Mammary epithelial cell (primary cell): ENCODE measurements at regions of chr1 and their contacts with region 1.

Region 1: DNA sequence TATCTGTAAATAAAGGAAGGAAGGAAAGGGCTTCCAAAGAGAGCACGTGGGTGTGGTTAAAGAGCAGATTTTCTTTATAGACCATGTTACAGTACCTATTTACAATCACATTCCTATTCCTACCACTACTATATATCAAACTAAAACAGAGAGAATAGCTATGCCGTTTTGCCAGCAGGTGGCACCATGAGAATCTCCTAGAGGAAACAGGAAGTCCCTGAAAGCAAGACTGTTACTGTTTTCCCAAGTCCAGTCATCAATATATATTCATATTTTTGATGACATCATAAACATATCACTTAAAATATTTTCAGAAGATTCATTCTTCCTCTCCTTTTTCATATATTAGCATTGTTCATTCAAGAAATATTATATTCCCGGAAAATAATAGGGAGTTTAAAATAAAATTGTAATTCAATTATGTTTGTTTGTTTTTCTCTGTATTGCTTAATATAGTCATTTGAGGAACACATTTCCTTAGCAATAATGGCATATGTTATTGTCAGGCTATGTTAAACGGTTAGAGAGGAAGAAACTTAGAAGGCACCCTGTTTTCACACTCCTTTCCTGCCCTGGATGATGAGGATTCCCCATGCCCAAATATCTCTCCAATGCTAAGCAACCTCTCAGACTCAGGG is 6.6 kb downstream of the CCDC190 start:
- DNase-seq: peak; percentile 58
- H3K4me3 ChIP-seq: no peak overlapping the region
- H3K27ac ChIP-seq: no peak overlapping the region
- H3K4me1 ChIP-seq: peaks cover 38% of the 10 kb centered on the region
- H3K27me3 ChIP-seq: no peaks in the 10 kb centered on the region
- CTCF ChIP-seq: peak; percentile 65 to 82

Region 2: GRCh38 chr1:162367073-162367472 is 487.3 kb before region 1 on chr1:
- CTCF ChIA-PET with region 1: interaction called, 13 read pairs
- dilution Hi-C with region 1: no loop called
- in situ Hi-C with region 1: no loop called
- intact Hi-C with region 1: no loop called
- DNase-seq: no peak
- H3K4me3 ChIP-seq: no peak overlapping the region
- H3K27ac ChIP-seq: no peak overlapping the region
- H3K4me1 ChIP-seq: peaks cover 16% of the 10 kb centered on the region
- H3K27me3 ChIP-seq: no peaks in the 10 kb centered on the region
- CTCF ChIP-seq: no peak

Region 3: GRCh38 chr1:162905174-162906158 is 51.1 kb after region 1 on chr1:
- CTCF ChIA-PET with region 1: no interaction called
- dilution Hi-C with region 1: no loop called
- in situ Hi-C with region 1: no loop called
- intact Hi-C with region 1: loop called (anchors 5 kb)
- DNase-seq: peak; percentile 82
- H3K4me3 ChIP-seq: no peak overlapping the region
- H3K27ac ChIP-seq: peak overlapping the region; percentile 51
- H3K4me1 ChIP-seq: peaks cover 42% of the 10 kb centered on the region
- H3K27me3 ChIP-seq: no peaks in the 10 kb centered on the region
- CTCF ChIP-seq: no peak

Region 4: GRCh38 chr1:163174524-163175437 is 320.4 kb after region 1 on chr1:
- CTCF ChIA-PET with region 1: no interaction called
- dilution Hi-C with region 1: loop called (anchors 25 kb)
- in situ Hi-C with region 1: loop called in 1 of 2 experiments (anchors 10 kb)
- intact Hi-C with region 1: loop called (anchors 1 kb)
- DNase-seq: peak; percentile 20
- H3K4me3 ChIP-seq: no peak overlapping the region
- H3K27ac ChIP-seq: no peak overlapping the region
- H3K4me1 ChIP-seq: no peaks in the 10 kb centered on the region
- H3K27me3 ChIP-seq: no peaks in the 10 kb centered on the region
- CTCF ChIP-seq: peak; percentile 78 to 92

Region 5: GRCh38 chr1:163321311-163322305 is 467.2 kb after region 1 on chr1 and contains the start of gene NUF2:
- CTCF ChIA-PET with region 1: no interaction called
- dilution Hi-C with region 1: loop called (anchors 25 kb)
- in situ Hi-C with region 1: loop called (anchors 5 to 10 kb)
- intact Hi-C with region 1: loop called (anchors 2 kb)
- DNase-seq: peak; percentile 98
- H3K4me3 ChIP-seq: peak within 1 kb of the TSS; percentile 82 to 100 (median 97)
- H3K27ac ChIP-seq: peak within 1 kb of the TSS; percentile 85
- H3K4me1 ChIP-seq: peaks cover 18% of the 10 kb centered on the region
- H3K27me3 ChIP-seq: no peaks in the 10 kb centered on the region
- CTCF ChIP-seq: no peak
- total RNA-seq, gene NUF2: 0.33 to 16.5 TPM